ENCODE measurements at regions of chr11 and their contacts with region 1.

Region 1: DNA sequence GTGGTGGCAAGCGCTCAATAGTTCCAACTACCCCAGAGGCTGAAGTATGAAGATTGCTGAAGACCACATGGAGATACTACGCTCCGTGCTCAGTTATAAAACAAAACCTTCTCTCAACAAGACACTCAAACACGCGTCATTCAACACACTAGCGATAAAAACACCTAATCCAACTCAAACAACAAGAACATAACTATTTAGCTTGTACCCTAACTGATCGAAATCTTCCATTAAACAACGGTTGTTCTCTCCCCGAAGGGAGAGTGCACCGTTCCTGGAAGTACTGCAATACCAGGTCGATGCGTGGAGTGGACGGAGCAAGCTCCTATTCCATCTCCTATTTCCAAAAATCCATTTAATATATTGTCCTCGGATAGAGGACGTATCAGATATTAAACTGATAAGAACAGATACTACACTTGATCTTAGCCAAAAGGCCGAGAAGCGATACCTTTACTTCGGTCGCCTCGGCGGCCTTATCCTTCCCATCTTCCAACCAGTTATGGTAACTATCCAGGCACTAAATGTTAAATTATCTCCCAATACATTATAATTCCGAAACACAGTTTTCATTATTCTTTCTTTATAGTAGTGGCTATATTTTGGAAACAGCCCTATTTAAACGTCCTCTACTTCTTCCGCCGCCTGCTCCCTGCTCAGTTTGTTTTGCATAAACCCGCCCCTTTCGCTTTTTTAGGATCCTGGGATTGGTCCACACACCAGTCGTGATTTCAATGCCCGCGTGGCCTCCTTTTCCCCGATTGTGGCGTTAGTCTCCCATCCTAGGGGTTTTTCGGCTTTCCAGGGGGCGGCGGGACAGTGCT is 2.2 kb upstream of the WDR74 start:
- DNase-seq: peak; percentile 68 to 94 (median 88)
- ATAC-seq: peak; percentile 71
- H3K4me3 ChIP-seq: peak overlapping the region; percentile 73
- H3K4me3 Mint-ChIP-seq: no peak overlapping the region
- H3K27ac ChIP-seq: peak overlapping the region; percentile 99
- H3K27ac Mint-ChIP-seq: no peak overlapping the region
- H3K4me1 ChIP-seq: peaks cover 9 to 22% of the 10 kb centered on the region in 2 donors
- H3K4me1 Mint-ChIP-seq: peaks cover 15 to 31% (median 26%) of the 10 kb centered on the region in 7 donors
- H3K27me3 ChIP-seq: no peaks in the 10 kb centered on the region
- H3K27me3 Mint-ChIP-seq: peaks cover 0 to 6% (median 0%) of the 10 kb centered on the region in 5 donors

Region 2: GRCh38 chr11:62665075-62665598 is 176.4 kb before region 1 on chr11 and contains the starts of genes C11orf98 and CSKMT:
- CTCF ChIA-PET with region 1: no interaction called
- POLR2A ChIA-PET with region 1: interaction called, 29 read pairs
- intact Hi-C with region 1: no loop called
- DNase-seq: peak; percentile 90 to 99 (median 95)
- ATAC-seq: peak; percentile 97
- H3K4me3 ChIP-seq: peak within 1 kb of the TSS; percentile 85
- H3K4me3 Mint-ChIP-seq: peak within 1 kb of the TSS; percentile 93 to 98 (median 96)
- H3K27ac ChIP-seq: peak within 1 kb of the TSS; percentile 85
- H3K27ac Mint-ChIP-seq: peak within 1 kb of the TSS; percentile 89 to 97 (median 93)
- H3K4me1 ChIP-seq: peaks cover 16 to 21% of the 10 kb centered on the region in 2 donors
- H3K4me1 Mint-ChIP-seq: peaks cover 13 to 45% (median 32%) of the 10 kb centered on the region in 7 donors
- H3K27me3 ChIP-seq: no peaks in the 10 kb centered on the region
- H3K27me3 Mint-ChIP-seq: no peaks in the 10 kb centered on the region
- total RNA-seq, gene C11orf98: 23.2 to 103 (median 47.6) TPM
- total RNA-seq, gene CSKMT: 8.9 to 29.3 (median 23.7) TPM

Region 3: GRCh38 chr11:62726915-62727763 is 114.4 kb before region 1 on chr11 and contains the start of gene HNRNPUL2:
- CTCF ChIA-PET with region 1: interaction called, 12 read pairs
- POLR2A ChIA-PET with region 1: interaction called, 79 read pairs
- intact Hi-C with region 1: loop called (anchors 1 kb)
- DNase-seq: peak; percentile 96 to 100 (median 99)
- ATAC-seq: peak; percentile 89
- H3K4me3 ChIP-seq: peak within 1 kb of the TSS; percentile 87
- H3K4me3 Mint-ChIP-seq: peak within 1 kb of the TSS; percentile 91 to 99 (median 96)
- H3K27ac ChIP-seq: peak within 1 kb of the TSS; percentile 92
- H3K27ac Mint-ChIP-seq: peak within 1 kb of the TSS; percentile 95 to 100 (median 98)
- H3K4me1 ChIP-seq: peaks cover 36 to 38% of the 10 kb centered on the region in 2 donors
- H3K4me1 Mint-ChIP-seq: peaks cover 23 to 65% (median 58%) of the 10 kb centered on the region in 7 donors
- H3K27me3 ChIP-seq: no peaks in the 10 kb centered on the region
- H3K27me3 Mint-ChIP-seq: peaks cover 0 to 2% (median 0%) of the 10 kb centered on the region in 5 donors
- total RNA-seq, gene HNRNPUL2: 43.4 to 77.5 (median 65.3) TPM

Region 4: GRCh38 chr11:62794201-62794775 is 47.3 kb before region 1 on chr11:
- CTCF ChIA-PET with region 1: no interaction called
- POLR2A ChIA-PET with region 1: interaction called, 181 read pairs
- intact Hi-C with region 1: loop called (anchors 1 kb)
- DNase-seq: no peak
- ATAC-seq: no peak
- H3K4me3 ChIP-seq: no peak overlapping the region
- H3K4me3 Mint-ChIP-seq: peak overlapping the region in 1 of 10 donors; percentile 6
- H3K27ac ChIP-seq: no peak overlapping the region
- H3K27ac Mint-ChIP-seq: peak overlapping the region in 7 of 9 donors; percentile 4 to 81 (median 59)
- H3K4me1 ChIP-seq: peaks cover 19 to 24% of the 10 kb centered on the region in 2 donors
- H3K4me1 Mint-ChIP-seq: peaks cover 17 to 40% (median 33%) of the 10 kb centered on the region in 7 donors
- H3K27me3 ChIP-seq: no peaks in the 10 kb centered on the region
- H3K27me3 Mint-ChIP-seq: no peaks in the 10 kb centered on the region

Region 5: GRCh38 chr11:62823677-62824076 is 17.9 kb before region 1 on chr11:
- CTCF ChIA-PET with region 1: no interaction called
- POLR2A ChIA-PET with region 1: interaction called, 71 read pairs
- intact Hi-C with region 1: no loop called
- DNase-seq: no peak
- ATAC-seq: no peak
- H3K4me3 ChIP-seq: no peak overlapping the region
- H3K4me3 Mint-ChIP-seq: no peak overlapping the region
- H3K27ac ChIP-seq: no peak overlapping the region
- H3K27ac Mint-ChIP-seq: peak overlapping the region in 1 of 9 donors; percentile 52
- H3K4me1 ChIP-seq: no peaks in the 10 kb centered on the region
- H3K4me1 Mint-ChIP-seq: peaks cover 3 to 25% (median 11%) of the 10 kb centered on the region in 7 donors
- H3K27me3 ChIP-seq: no peaks in the 10 kb centered on the region
- H3K27me3 Mint-ChIP-seq: no peaks in the 10 kb centered on the region

Region 6: DNA sequence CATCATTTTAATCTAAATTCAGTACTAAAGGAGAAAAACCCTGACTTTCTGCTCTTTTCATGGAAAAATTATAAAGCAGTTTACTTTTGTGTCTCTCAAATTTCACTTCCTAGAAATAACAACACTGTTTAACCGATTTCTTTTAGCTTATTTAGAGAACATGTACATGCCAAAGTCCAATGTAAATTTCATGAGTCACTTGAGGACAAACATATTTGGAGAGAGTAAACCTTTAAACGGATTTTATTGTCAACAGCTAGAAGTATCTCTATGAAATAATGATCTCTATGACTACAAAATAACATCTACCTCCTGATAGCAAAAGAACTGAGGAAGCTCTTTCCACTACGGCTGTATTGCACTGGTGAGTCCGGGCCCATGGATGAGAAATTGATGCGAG is 448.1 kb after region 1 on chr11:
- CTCF ChIA-PET with region 1: no interaction called
- POLR2A ChIA-PET with region 1: no interaction called
- intact Hi-C with region 1: no loop called
- DNase-seq: no peak
- ATAC-seq: no peak
- H3K4me3 ChIP-seq: no peak overlapping the region
- H3K4me3 Mint-ChIP-seq: no peak overlapping the region
- H3K27ac ChIP-seq: no peak overlapping the region
- H3K27ac Mint-ChIP-seq: no peak overlapping the region
- H3K4me1 ChIP-seq: no peaks in the 10 kb centered on the region
- H3K4me1 Mint-ChIP-seq: no peaks in the 10 kb centered on the region
- H3K27me3 ChIP-seq: no peaks in the 10 kb centered on the region
- H3K27me3 Mint-ChIP-seq: peaks cover 16 to 35% (median 22%) of the 10 kb centered on the region in 5 donors

Measured in naive thymus-derived CD4-positive, alpha-beta T cell (primary cell).